GM10248 (cell line): ENCODE measurements at regions of chr2 and their contacts with region 1.

Region 1: DNA sequence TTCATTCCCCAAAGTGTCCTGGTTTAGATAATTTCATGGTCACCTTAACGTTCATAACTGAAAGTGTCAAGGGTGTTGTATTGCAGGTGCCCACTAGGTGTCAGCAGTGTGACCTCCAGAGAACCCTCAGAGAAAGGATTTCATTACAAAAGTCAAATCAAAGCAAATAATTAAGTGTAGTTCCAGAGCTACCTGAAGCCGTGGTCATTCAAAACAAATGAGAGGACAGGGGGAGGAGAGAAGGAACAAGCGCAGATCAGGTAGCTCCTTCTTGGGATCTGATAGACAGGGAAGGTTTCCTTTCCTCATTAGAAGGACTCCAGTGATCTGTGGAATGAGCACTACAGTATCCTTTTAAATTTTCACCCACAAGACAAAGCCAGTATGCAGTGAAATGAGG is at the start of gene SLC9A4:
- DNase-seq: peak; percentile 30
- CTCF ChIP-seq: peak; percentile 78

Region 2: DNA sequence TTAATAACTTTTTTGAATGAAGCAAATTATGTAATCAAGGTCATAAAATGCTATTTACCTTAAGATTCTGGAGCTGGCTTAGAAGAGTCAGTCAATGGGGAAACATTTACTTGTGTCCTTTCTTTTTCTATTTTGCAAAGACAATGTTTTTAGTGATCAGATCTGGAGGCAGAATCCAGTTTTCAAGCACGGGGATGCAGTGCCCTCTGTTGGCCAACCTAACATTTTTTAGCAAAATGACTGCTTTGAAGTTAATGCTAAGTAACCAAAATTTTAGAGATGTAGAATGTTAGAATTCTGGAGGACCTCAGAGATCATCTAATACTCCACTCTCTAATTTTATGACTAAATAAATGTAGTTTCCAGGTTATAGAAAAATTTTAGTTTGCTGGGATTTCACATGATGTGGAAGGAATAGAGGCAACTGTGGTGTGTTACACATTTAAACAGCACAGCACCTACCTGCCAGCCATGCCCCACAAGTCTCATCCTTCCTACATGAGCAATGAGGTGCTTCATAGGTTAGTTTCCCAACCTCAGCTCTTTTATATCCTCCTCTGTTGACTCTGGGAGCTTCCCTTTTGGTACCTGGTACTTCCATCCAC is 23.5 kb before region 1 on chr2:
- CTCF ChIA-PET with region 1: interaction called, 16 read pairs
- POLR2A ChIA-PET with region 1: no interaction called
- DNase-seq: peak; percentile 46
- CTCF ChIP-seq: peak; percentile 79

Region 3: DNA sequence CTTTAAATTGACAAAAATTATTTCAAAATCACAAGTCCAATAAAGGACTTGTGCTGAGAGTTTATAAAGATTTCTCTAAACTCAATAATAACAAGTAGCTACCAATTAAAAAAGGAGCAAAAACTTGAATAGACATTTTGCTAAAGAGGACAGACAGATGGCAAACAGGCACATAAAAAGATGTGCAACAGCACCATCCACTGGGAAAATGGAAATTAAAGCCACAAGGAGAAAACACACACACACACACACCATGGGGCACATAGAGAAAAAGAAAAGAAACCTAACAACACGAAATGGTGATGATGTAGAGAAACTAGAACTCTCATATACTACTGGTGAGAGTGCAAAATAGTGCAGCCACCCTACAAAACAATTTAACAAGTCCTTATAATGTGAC is 12.6 kb before region 1 on chr2:
- CTCF ChIA-PET with region 1: interaction called, 43 read pairs
- POLR2A ChIA-PET with region 1: no interaction called
- DNase-seq: no peak
- CTCF ChIP-seq: no peak

Region 4: DNA sequence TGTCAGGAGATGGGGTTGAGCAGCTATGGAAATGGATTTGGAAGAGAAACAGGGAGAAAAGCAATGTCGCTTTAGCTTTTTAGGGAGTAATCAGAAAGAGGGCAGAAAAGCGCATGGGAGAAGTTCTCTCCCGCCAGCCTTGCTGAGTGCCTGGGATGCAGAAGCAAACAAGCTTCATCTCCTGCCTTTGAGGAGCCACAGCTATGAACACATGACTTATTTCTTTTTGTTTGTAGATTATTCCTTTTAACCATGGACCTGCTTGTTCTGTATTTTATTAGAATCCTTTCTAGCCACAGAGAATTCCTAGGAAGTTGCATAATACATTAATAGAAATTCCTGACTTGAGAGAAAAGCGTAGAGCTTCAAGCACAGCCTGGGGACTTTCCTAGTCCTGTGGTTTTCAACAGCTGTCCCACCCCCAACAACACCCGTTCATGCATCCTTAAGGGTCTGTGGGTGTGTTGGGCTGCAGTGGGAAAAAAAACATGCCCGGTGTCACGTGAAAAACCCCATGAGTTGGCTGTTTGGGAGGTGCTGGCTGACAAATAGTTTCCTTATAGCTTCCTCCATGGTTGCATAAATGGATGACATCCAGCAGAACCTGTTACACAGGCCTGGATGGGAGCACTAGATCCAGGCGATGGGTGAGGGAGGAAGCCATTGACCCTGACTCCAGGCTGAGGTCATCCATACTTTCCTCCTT is 14.9 kb after region 1 on chr2:
- CTCF ChIA-PET with region 1: interaction called, 48 read pairs
- POLR2A ChIA-PET with region 1: no interaction called
- DNase-seq: no peak
- CTCF ChIP-seq: no peak

Region 5: GRCh38 chr2:102615622-102616436 is 142.8 kb after region 1 on chr2:
- CTCF ChIA-PET with region 1: interaction called, 63 read pairs
- POLR2A ChIA-PET with region 1: no interaction called
- DNase-seq: peak; percentile 63
- CTCF ChIP-seq: peak; percentile 91

Region 6: DNA sequence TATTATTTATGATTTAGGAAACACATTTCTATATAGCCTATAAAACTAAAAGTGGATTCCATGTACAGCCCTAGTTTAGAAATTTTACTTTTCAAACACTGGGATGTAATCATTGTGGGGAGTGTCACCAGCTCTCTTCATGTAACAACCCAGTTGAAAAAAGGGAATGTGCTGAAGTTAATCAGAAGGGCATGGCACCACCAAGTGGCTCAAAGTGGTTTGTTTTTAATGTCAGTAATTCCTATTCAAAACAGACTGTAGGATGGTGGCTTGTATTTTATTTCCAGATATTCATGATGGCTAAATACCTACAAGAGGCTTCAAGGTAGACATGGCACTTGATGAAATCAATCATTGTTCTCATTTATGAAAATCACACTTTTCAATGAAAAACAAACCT is 230.7 kb after region 1 on chr2:
- CTCF ChIA-PET with region 1: interaction called, 19 read pairs
- POLR2A ChIA-PET with region 1: no interaction called
- DNase-seq: peak; percentile 23
- CTCF ChIP-seq: peak; percentile 49